ENCODE measurements at regions of chr12 and their contacts with region 1.

Region 1: GRCh38 chr12:124567661-124568373 is 405 bp upstream of the NCOR2 start:
- DNase-seq: no peak
- ATAC-seq: peak; percentile 70
- H3K4me3 ChIP-seq: peak overlapping the region; percentile 95
- H3K27ac ChIP-seq: peak overlapping the region; percentile 82
- H3K4me1 ChIP-seq: peaks cover 25% of the 10 kb centered on the region
- H3K27me3 ChIP-seq: no peaks in the 10 kb centered on the region
- CTCF ChIP-seq: peak in 1 of 3 experiments; percentile 14; a peak in 2 of 6 replicates
- EP300 ChIP-seq: no peak
- POLR2A ChIP-seq: peak; percentile 57
- RAD21 ChIP-seq: no peak

Region 2: DNA sequence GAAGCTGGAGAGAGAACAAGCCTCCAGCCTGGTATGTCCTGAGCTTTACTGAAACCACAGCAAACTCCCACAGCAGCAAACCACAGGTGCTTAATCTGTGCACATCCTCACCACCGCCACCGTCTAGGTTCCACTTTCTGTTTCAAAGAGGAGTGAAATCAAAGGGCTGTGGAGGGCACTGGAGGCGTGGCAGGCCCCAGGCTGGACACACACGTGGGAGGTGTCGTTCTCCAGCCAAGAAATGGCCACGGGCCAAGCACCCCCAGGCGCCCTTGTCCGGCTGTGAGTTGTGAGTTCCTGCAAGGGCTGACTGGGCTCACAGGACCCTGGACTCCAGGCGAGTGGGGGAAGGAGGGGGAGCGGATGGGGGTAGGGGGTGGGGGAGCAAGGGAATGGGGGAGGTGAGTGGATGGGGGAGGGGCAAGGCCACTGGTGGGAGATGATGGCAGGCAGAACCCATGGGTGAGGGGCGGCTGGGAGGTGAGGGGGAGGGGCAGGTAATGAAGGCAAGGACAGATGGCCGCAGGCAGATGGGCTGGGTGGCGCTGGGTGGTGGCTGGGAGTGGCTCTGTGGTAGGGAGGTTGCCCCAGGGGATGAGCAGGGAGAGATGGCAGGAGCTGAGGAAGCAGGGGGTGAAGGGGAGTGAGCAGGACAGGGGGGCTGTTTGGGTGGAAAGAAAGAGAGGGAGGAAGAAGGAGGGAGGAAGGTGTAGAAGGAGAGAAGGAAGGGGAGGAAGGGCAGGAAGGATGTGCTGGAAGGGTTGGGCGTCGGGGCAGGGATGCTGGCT is 87.2 kb before region 1 on chr12:
- CTCF ChIA-PET with region 1: no interaction called
- POLR2A ChIA-PET with region 1: interaction called, 3 read pairs
- RAD21 ChIA-PET with region 1: interaction called, 4 read pairs
- SMC1A ChIA-PET with region 1: interaction called, 3 read pairs
- in situ Hi-C with region 1: no loop called
- intact Hi-C with region 1: loop called (anchors 5 kb)
- DNase-seq: peak; percentile 84
- ATAC-seq: peak; percentile 85
- H3K4me3 ChIP-seq: peak overlapping the region; percentile 51
- H3K27ac ChIP-seq: peak overlapping the region; percentile 86
- H3K4me1 ChIP-seq: peaks cover 66% of the 10 kb centered on the region
- H3K27me3 ChIP-seq: no peaks in the 10 kb centered on the region
- CTCF ChIP-seq: no peak
- EP300 ChIP-seq: peak in 1 of 2 experiments; percentile 50; a peak in 1 of 4 replicates
- POLR2A ChIP-seq: no peak; the same call in none of the 2 replicates
- RAD21 ChIP-seq: peak; percentile 16; the same call in 1 of the 2 replicates

Region 3: GRCh38 chr12:124545508-124546418 is 22.1 kb before region 1 on chr12:
- CTCF ChIA-PET with region 1: interaction called, 4 read pairs
- POLR2A ChIA-PET with region 1: interaction called, 31 read pairs
- RAD21 ChIA-PET with region 1: interaction called, 37 read pairs
- SMC1A ChIA-PET with region 1: interaction called, 48 read pairs
- in situ Hi-C with region 1: no loop called
- intact Hi-C with region 1: loop called (anchors 2 kb)
- DNase-seq: peak; percentile 76
- ATAC-seq: peak; percentile 95
- H3K4me3 ChIP-seq: peak overlapping the region; percentile 59
- H3K27ac ChIP-seq: peak overlapping the region; percentile 90
- H3K4me1 ChIP-seq: peaks cover 70% of the 10 kb centered on the region
- H3K27me3 ChIP-seq: no peaks in the 10 kb centered on the region
- CTCF ChIP-seq: no peak
- EP300 ChIP-seq: peak; percentile 61 to 72; a peak in 3 of 4 replicates
- POLR2A ChIP-seq: peak; percentile 37; the same call in 1 of the 2 replicates
- RAD21 ChIP-seq: no peak

Region 4: DNA sequence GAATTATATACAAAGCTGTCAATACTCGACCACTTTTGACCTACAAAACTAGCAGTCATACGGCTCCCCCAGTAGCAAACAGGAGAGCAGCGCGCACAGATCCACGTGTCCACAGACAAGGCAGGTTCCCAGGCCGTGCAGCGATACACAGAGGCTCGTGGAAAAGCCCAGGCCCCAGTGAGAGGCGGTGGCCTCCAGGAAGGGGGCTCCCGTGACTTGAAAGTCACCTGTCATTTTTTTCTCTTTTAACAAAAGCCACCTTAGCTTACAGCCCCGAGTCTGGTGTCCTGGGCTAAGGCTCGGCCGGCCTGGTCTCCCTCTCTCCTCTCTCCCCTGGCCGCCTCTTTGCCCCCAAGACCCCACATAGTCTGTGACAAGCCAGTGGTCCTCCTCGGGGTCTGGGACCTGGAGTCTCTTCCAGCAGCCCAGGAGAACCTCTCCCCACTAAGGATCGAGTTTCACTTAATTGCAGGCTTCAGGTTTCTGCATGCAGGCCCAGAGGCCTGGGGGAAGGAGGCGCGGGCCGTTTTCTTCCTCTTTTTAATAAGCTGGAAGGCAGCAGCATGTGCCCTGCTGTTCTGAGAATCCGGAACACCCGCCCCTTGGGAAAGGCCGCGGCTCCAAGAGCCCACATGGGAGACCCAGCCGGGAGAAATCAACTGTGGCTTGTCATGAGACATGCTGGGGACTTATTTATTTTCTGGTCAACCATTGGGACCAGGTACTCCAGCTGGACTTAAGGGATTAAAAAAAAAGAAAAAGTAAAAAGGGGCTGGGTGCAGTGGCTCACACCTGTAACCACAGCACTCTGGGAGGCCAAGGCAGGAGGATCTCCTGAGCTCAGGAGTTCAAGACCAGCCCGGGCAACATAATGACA is 16.3 kb before region 1 on chr12:
- CTCF ChIA-PET with region 1: interaction called, 5 read pairs
- POLR2A ChIA-PET with region 1: interaction called, 31 read pairs
- RAD21 ChIA-PET with region 1: interaction called, 37 read pairs
- SMC1A ChIA-PET with region 1: interaction called, 48 read pairs
- in situ Hi-C with region 1: no loop called
- intact Hi-C with region 1: no loop called
- DNase-seq: no peak
- ATAC-seq: peak; percentile 49
- H3K4me3 ChIP-seq: peak overlapping the region; percentile 25
- H3K27ac ChIP-seq: peak overlapping the region; percentile 79
- H3K4me1 ChIP-seq: peaks cover 79% of the 10 kb centered on the region
- H3K27me3 ChIP-seq: no peaks in the 10 kb centered on the region
- CTCF ChIP-seq: no peak
- EP300 ChIP-seq: no peak
- POLR2A ChIP-seq: no peak
- RAD21 ChIP-seq: peak; percentile 12; the same call in 1 of the 2 replicates

Region 5: GRCh38 chr12:125029761-125030358 is 462.0 kb after region 1 on chr12:
- CTCF ChIA-PET with region 1: no interaction called
- POLR2A ChIA-PET with region 1: no interaction called
- RAD21 ChIA-PET with region 1: no interaction called
- SMC1A ChIA-PET with region 1: no interaction called
- in situ Hi-C with region 1: no loop called
- intact Hi-C with region 1: no loop called
- DNase-seq: no peak
- ATAC-seq: peak; percentile 42
- H3K4me3 ChIP-seq: no peak overlapping the region
- H3K27ac ChIP-seq: no peak overlapping the region
- H3K4me1 ChIP-seq: no peaks in the 10 kb centered on the region
- H3K27me3 ChIP-seq: no peaks in the 10 kb centered on the region
- CTCF ChIP-seq: no peak
- EP300 ChIP-seq: no peak
- POLR2A ChIP-seq: no peak
- RAD21 ChIP-seq: no peak